ENCODE measurements at regions of chr9 and their contacts with region 1.

Region 1: DNA sequence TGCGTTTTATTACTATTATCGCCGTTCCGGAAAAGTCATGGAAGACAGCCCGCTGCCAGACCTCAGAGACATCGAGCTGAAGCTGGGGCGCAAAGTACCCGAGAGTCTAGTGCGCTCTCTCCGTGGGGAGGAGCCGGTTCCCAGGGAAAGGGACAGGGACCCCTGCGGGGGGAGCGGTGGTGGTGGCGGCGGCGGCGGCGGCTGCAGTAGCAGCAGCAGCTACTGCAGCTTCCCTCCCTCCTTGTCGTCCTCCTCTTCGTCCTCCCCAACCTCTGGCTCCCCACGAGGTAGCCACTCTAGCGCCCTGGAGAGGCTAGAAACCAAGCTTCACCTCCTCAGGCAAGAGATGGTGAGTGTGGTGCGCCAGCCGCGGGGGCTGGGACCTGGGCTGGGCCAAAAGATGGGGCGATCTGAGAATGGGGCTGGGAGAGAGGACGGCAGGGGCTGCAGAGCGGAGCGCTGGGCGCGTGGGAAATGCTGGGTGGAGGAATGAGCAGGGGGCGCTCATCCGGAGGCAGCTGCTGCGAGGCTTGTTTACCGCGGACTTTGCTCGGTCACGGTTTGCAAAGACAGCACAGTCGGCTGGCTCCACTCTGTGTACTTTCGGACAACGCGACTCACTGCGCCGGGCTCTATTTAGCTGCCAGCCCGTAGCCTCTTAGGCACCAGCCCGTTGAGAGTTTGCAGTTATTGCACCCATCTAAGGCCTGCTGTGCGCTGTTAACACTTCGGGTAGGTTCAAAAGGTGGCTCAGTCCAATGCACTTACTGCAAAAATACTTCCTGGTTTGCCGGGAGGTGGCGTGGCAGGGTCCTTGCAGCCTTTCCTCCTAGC is 1.1 kb downstream of the LURAP1L start:
- DNase-seq: peak; percentile 83
- H3K4me3 ChIP-seq: peak overlapping the region; percentile 66 to 97 (median 94)
- H3K27ac ChIP-seq: peak overlapping the region; percentile 27
- H3K4me1 ChIP-seq: peaks cover 2% of the 10 kb centered on the region
- H3K27me3 ChIP-seq: no peaks in the 10 kb centered on the region
- CTCF ChIP-seq: peak; percentile 25 to 39
- POLR2A ChIP-seq: no peak

Region 2: DNA sequence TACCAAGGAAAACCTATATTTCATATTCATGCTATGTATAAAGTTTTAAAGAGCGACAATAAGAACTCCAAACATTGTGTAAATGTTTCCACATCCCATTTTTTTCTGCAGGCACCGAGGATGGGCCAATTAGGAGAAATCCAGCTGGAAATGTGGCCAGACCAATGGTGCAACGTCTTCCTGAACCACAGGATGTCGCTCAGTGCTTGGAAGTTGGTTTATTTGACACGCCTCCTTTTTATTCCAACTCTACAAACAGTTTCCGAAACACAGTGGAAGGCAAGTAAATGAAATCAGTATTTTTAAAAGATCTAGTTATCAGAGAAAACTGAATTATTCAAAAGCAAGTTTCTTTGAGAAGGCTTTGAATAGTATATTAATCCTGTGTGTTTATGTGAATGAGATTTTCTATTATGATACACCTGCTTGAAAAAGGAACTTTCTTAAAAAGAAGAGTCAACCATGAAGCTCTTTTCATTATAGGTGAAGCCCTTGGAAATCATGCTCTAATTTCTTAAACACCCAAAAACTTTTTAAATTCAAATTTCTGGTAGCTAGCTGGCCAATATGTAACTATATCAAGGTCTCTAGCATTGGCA is 73.6 kb before region 1 on chr9:
- CTCF ChIA-PET with region 1: interaction called, 10 read pairs
- POLR2A ChIA-PET with region 1: no interaction called
- dilution Hi-C with region 1: no loop called
- intact Hi-C with region 1: loop called (anchors 2 kb)
- DNase-seq: peak; percentile 70
- H3K4me3 ChIP-seq: no peak overlapping the region
- H3K27ac ChIP-seq: no peak overlapping the region
- H3K4me1 ChIP-seq: no peaks in the 10 kb centered on the region
- H3K27me3 ChIP-seq: no peaks in the 10 kb centered on the region
- CTCF ChIP-seq: peak; percentile 58 to 62
- POLR2A ChIP-seq: no peak

Region 3: DNA sequence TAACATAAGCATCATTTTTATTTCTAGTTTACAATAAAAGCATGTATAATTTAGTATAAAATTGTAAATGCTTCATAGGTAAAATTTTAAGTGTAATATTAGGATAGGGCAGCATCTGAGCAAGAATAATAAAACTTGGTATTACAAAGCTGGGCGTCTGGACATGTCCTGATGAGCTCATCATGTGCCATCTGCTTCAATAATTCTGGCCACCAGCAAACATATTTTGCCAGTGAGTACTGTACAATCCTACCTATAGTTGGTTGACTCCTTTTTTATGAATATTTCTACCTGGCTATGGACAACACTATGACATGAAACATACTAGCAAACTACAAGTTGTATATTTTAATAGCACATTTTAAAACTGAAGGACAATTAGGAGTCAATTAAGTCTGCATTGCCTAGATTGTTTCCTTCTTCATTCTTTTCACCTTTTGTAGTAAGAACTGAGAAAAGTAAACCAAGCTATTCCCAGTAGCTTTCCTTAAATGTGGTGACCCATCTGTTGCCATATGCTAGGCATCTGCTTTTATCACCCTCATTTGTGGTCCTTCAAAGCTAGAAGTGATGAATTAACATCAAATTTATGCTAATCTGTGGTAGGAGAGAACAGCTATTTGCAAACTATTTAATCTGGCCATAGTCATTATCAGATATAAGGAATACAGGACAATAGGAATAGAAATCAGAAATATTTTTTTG is 22.3 kb after region 1 on chr9:
- CTCF ChIA-PET with region 1: interaction called, 10 read pairs
- POLR2A ChIA-PET with region 1: no interaction called
- dilution Hi-C with region 1: no loop called
- intact Hi-C with region 1: loop called (anchors 2 kb)
- DNase-seq: no peak
- H3K4me3 ChIP-seq: no peak overlapping the region
- H3K27ac ChIP-seq: no peak overlapping the region
- H3K4me1 ChIP-seq: peaks cover 10% of the 10 kb centered on the region
- H3K27me3 ChIP-seq: no peaks in the 10 kb centered on the region
- CTCF ChIP-seq: no peak
- POLR2A ChIP-seq: no peak

Region 4: GRCh38 chr9:12813960-12814876 is 38.3 kb after region 1 on chr9:
- CTCF ChIA-PET with region 1: interaction called, 23 read pairs
- POLR2A ChIA-PET with region 1: interaction called, 9 read pairs
- dilution Hi-C with region 1: no loop called
- intact Hi-C with region 1: loop called (anchors 1 kb)
- DNase-seq: peak; percentile 99
- H3K4me3 ChIP-seq: peak overlapping the region in 2 of 3 experiments; percentile 11 to 75
- H3K27ac ChIP-seq: peak overlapping the region; percentile 99
- H3K4me1 ChIP-seq: peaks cover 23% of the 10 kb centered on the region
- H3K27me3 ChIP-seq: no peaks in the 10 kb centered on the region
- CTCF ChIP-seq: peak; percentile 3 to 22
- POLR2A ChIP-seq: no peak

Region 5: DNA sequence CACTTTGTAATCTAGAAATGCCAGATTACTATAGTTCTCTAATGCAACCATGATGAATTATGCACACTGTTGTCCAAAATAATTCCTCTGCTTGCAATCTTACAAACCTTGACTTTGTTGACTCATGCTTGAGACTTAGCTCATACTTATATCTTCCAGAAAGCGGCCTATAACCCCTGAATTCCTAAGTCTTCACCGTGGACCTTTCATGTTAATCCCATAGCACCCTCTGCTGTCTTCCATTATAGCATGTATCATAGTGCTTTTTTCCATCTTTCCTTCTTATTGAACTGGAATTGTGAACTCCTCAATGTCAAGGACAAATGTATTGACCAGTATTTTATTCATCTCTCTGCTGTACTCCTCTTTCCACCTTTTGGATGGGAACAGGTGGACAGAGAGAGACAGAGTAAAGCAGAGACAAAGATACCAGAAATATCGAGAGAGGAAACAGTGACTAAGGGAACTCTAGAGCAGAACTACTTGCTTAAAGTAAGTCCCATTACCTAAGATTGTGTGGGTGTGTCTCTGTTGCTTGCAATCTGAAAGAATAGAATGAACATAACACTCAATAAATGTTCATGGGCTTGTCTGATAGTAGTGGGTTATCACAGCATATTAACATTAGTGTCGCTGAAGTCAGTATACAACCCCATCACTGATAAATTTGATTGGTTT is 109.0 kb after region 1 on chr9:
- CTCF ChIA-PET with region 1: interaction called, 36 read pairs
- POLR2A ChIA-PET with region 1: no interaction called
- dilution Hi-C with region 1: no loop called
- intact Hi-C with region 1: loop called (anchors 1 kb)
- DNase-seq: peak; percentile 64
- H3K4me3 ChIP-seq: no peak overlapping the region
- H3K27ac ChIP-seq: no peak overlapping the region
- H3K4me1 ChIP-seq: no peaks in the 10 kb centered on the region
- H3K27me3 ChIP-seq: no peaks in the 10 kb centered on the region
- CTCF ChIP-seq: peak; percentile 22 to 32
- POLR2A ChIP-seq: no peak

Region 6: GRCh38 chr9:13088720-13089427 is 313.0 kb after region 1 on chr9:
- CTCF ChIA-PET with region 1: interaction called, 5 read pairs
- POLR2A ChIA-PET with region 1: no interaction called
- dilution Hi-C with region 1: no loop called
- intact Hi-C with region 1: loop called (anchors 5 kb)
- DNase-seq: peak; percentile 61
- H3K4me3 ChIP-seq: peak overlapping the region in 1 of 3 experiments; percentile 35
- H3K27ac ChIP-seq: no peak overlapping the region
- H3K4me1 ChIP-seq: peaks cover 9% of the 10 kb centered on the region
- H3K27me3 ChIP-seq: no peaks in the 10 kb centered on the region
- CTCF ChIP-seq: peak; percentile 36 to 66
- POLR2A ChIP-seq: no peak